Mammary epithelial cell (primary cell): ENCODE measurements at regions of chr12 and their contacts with region 1.

Region 1: GRCh38 chr12:6825398-6826124 is 2.6 kb upstream of the P3H3 start:
- DNase-seq: peak; percentile 71
- H3K4me3 ChIP-seq: peak overlapping the region in 2 of 3 experiments; percentile 29 to 30
- H3K27ac ChIP-seq: no peak overlapping the region
- H3K4me1 ChIP-seq: peaks cover 22% of the 10 kb centered on the region
- H3K27me3 ChIP-seq: peaks cover 29% of the 10 kb centered on the region
- CTCF ChIP-seq: peak; percentile 80 to 95

Region 2: DNA sequence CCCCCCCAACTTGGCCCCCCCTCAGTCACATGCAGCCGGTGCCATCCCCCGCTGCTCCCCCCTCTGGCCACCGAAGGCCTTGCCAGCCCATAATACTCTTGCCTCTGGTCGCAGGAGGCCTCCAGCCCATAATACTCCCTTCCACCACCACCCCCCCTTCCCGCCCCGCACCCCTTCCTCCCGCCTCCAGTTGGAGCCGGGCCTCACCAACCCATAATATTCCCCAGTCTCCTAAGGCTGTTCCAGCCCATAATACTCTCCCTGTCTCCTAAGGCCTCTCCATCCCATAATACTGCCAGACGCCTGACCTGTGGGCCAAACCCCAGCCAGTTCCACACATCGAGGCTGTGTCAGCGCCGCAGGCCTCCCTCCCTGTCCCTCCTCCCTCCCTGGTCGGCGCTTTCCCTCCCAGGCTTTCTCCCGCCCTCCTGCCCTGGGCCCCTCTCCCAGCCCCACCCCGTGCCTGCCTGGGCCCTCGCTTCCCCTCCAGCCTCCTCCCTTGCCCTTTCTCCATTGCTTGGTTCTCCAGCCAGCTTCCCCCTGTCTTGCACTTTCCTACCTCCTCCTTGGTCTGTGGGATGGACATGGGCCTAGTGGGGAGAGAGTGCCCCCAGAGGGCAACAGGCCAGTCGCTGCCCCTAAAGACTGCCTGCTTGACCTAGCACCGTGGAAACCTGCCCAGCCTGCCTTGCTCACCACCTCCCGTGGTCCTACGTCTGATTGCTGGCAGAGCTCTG is 211.6 kb before region 1 on chr12:
- CTCF ChIA-PET with region 1: no interaction called
- dilution Hi-C with region 1: no loop called
- in situ Hi-C with region 1: no loop called
- intact Hi-C with region 1: loop called (anchors 1 kb)
- DNase-seq: peak; percentile 65
- H3K4me3 ChIP-seq: no peak overlapping the region
- H3K27ac ChIP-seq: no peak overlapping the region
- H3K4me1 ChIP-seq: peaks cover 17% of the 10 kb centered on the region
- H3K27me3 ChIP-seq: no peaks in the 10 kb centered on the region
- CTCF ChIP-seq: no peak

Region 3: DNA sequence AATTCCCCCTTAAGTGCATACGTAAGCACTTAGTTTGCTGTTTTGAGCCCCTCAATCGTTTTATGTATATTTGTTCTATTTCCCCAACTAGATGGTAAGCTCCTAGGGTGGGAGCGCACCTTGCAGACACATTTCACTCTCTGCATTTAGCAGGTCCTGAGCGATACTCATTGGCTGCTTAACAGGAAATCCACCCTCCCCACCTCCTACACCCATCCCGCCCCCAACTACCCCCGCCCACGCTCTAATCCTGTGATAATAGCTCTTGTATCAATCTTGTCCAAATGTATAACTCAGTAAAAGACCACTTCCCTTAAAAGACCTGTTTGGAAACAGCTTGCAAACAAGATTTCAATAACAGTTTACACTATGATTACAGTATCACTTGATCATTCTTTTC is 197.9 kb before region 1 on chr12:
- CTCF ChIA-PET with region 1: no interaction called
- dilution Hi-C with region 1: no loop called
- in situ Hi-C with region 1: no loop called
- intact Hi-C with region 1: no loop called
- DNase-seq: no peak
- H3K4me3 ChIP-seq: no peak overlapping the region
- H3K27ac ChIP-seq: no peak overlapping the region
- H3K4me1 ChIP-seq: peaks cover 9% of the 10 kb centered on the region
- H3K27me3 ChIP-seq: no peaks in the 10 kb centered on the region
- CTCF ChIP-seq: no peak

Region 4: GRCh38 chr12:6730169-6730568 is 95.4 kb before region 1 on chr12:
- CTCF ChIA-PET with region 1: no interaction called
- dilution Hi-C with region 1: loop called (anchors 5 kb)
- in situ Hi-C with region 1: no loop called
- intact Hi-C with region 1: loop called (anchors 1 kb)
- DNase-seq: no peak
- H3K4me3 ChIP-seq: no peak overlapping the region
- H3K27ac ChIP-seq: no peak overlapping the region
- H3K4me1 ChIP-seq: peaks cover 2% of the 10 kb centered on the region
- H3K27me3 ChIP-seq: no peaks in the 10 kb centered on the region
- CTCF ChIP-seq: no peak

Region 5: DNA sequence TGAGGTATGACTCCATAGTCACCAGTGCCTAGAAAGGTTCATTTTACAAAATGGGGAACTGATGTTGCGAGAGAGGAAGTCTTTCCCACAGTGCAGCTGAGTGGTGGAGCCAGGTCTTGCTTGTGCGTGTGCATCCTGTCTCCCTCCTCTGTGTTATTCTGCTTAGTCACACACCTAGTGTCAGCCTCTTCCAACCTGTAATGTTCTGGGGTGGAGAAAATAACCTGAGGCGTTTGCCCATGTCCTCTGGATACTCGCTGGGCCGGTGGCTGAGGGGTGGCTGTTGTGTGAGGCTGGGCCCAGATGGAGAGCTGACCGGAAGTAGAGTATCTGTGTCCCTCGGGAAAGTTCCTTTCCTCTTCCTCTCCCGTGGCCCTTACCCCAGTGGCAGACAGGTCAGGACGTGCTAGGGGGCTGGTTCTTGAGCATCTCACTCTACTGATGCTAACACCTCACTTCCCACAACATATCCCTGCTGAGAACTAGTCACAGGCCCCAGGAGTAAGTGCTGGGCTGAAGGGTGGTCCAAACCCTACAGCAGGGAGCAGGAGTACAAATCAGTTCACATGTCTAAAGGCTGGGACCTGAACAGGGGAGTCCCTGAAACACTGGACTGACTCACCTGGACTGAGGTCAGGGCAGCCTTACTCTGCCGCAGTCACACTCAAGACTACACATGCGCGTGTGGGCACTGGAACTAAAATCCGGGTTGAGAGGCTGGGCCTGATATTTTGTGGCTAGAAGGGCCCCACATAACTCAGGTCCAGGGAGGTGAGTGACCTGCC is 79.6 kb before region 1 on chr12:
- CTCF ChIA-PET with region 1: no interaction called
- dilution Hi-C with region 1: no loop called
- in situ Hi-C with region 1: loop called (anchors 5 to 10 kb)
- intact Hi-C with region 1: no loop called
- DNase-seq: peak; percentile 84
- H3K4me3 ChIP-seq: no peak overlapping the region
- H3K27ac ChIP-seq: peak overlapping the region; percentile 56
- H3K4me1 ChIP-seq: peaks cover 29% of the 10 kb centered on the region
- H3K27me3 ChIP-seq: no peaks in the 10 kb centered on the region
- CTCF ChIP-seq: no peak

Region 6: GRCh38 chr12:6766651-6767349 is 58.8 kb before region 1 on chr12:
- CTCF ChIA-PET with region 1: no interaction called
- dilution Hi-C with region 1: loop called (anchors 5 kb)
- in situ Hi-C with region 1: no loop called
- intact Hi-C with region 1: loop called (anchors 1 kb)
- DNase-seq: peak; percentile 73
- H3K4me3 ChIP-seq: peak overlapping the region; percentile 41 to 78 (median 76)
- H3K27ac ChIP-seq: no peak overlapping the region
- H3K4me1 ChIP-seq: peaks cover 33% of the 10 kb centered on the region
- H3K27me3 ChIP-seq: no peaks in the 10 kb centered on the region
- CTCF ChIP-seq: peak; percentile 28 to 50

Region 7: DNA sequence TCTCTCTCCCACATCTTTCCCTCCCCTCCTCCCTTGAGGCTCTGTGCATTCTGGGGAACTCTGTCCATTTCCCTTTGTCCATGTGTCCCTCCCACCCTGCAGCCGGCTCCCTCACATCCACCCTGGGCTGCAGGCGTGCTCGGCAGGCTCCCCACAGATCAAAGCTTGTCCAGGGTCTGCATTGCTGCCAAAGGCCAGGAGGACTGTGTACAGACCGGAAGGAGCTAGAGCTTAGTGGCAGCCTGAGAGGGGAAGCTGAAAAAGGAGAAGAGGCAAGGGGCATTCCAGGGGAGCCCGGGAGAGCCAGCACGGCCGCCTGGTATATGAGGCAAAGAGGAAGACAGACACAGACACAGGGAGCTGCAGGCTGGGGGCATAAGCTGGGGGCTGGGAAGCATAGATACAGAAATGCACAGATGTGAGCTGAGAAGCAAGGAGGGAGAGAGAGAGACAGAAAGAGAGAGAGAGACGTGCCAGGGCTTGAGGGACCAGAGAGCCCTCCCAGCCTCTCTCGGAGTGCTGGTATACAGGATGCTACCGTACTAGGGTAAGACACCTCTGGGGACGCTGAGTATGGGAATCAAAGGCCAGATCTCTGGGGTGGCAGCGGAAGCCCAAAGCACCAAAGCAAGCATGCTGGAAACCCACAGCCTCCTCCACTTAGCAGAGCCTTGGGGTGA is 32.9 kb before region 1 on chr12:
- CTCF ChIA-PET with region 1: no interaction called
- dilution Hi-C with region 1: loop called (anchors 5 kb)
- in situ Hi-C with region 1: no loop called
- intact Hi-C with region 1: no loop called
- DNase-seq: no peak
- H3K4me3 ChIP-seq: no peak overlapping the region
- H3K27ac ChIP-seq: no peak overlapping the region
- H3K4me1 ChIP-seq: peaks cover 4% of the 10 kb centered on the region
- H3K27me3 ChIP-seq: no peaks in the 10 kb centered on the region
- CTCF ChIP-seq: no peak

Region 8: GRCh38 chr12:6887460-6887859 is 61.9 kb after region 1 on chr12:
- CTCF ChIA-PET with region 1: no interaction called
- dilution Hi-C with region 1: no loop called
- in situ Hi-C with region 1: no loop called
- intact Hi-C with region 1: no loop called
- DNase-seq: no peak
- H3K4me3 ChIP-seq: no peak overlapping the region
- H3K27ac ChIP-seq: no peak overlapping the region
- H3K4me1 ChIP-seq: peaks cover 12% of the 10 kb centered on the region
- H3K27me3 ChIP-seq: no peaks in the 10 kb centered on the region
- CTCF ChIP-seq: no peak